ENCODE measurements at regions of chr11 and their contacts with region 1.

Region 1: DNA sequence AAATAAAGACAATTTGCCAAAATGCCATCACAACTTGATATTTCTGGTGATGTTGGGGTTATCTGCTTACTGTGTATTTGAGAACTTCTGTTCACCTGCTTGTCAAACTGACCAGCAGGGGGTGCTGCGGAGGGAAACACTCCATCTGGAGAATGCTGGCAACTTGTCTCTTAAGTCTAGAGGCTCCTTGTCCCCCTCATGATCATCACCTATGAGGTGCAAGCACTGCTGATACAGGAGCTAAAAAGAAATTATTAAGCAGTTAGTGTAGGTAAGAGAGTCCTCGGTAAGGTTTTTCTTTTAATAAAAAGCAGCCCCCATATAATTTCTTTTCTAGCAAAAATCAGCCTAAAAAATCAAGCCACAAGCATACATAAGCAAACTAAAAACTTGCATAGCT is 32.7 kb upstream of the GLYATL1B start:
- H3K4me3 Mint-ChIP-seq: no peak overlapping the region
- H3K27ac Mint-ChIP-seq: no peak overlapping the region
- H3K4me1 Mint-ChIP-seq: peaks cover 12% of the 10 kb centered on the region
- H3K27me3 Mint-ChIP-seq: peaks cover 6% of the 10 kb centered on the region

Region 2: GRCh38 chr11:58958500-58958899 is 94.9 kb before region 1 on chr11:
- intact Hi-C with region 1: loop called (anchors 1 kb)
- H3K4me3 Mint-ChIP-seq: no peak overlapping the region
- H3K27ac Mint-ChIP-seq: no peak overlapping the region
- H3K4me1 Mint-ChIP-seq: no peaks in the 10 kb centered on the region
- H3K27me3 Mint-ChIP-seq: no peaks in the 10 kb centered on the region

Region 3: GRCh38 chr11:59076876-59077571 is 23.6 kb after region 1 on chr11:
- intact Hi-C with region 1: no loop called
- H3K4me3 Mint-ChIP-seq: no peak overlapping the region
- H3K27ac Mint-ChIP-seq: no peak overlapping the region
- H3K4me1 Mint-ChIP-seq: peaks cover 27% of the 10 kb centered on the region
- H3K27me3 Mint-ChIP-seq: peaks cover 6% of the 10 kb centered on the region

Region 4: DNA sequence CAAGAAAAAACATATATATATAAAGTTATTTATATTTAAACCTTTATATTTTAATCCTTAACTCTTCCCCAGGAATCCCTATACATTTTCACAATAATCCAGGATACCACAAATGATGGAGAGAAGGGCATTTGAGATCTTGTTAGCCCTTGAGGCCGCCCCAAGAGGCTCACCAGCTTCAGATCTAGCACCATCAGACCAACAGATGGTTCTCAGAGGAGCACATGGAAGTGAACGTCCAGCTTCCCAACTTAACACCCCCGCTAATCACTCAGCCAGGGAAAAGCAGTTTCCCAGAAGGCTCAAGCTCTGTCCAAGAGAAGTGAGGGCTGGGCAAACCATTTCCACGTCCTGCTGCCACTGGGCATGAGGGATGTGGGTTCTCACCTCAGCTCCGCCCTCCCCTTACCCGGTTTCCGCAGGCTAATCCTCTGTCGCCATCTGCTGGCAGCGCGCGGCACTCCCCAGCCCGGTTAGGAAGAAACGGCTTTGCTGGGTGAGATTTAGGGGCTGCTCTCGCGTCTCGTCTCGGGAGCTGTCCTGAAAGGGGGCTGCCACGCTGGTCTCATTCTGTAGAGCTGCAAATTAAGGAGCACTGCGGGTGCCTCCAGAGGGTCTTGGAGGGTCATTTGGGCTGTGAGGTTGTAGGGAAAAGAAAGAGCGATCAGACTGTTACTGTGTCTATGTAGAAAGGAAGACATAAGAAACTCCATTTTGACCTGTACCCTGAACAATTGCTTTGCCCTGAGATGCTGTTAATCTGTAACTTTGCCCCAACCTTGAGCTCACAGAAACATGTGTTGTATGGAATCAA is 82.5 kb after region 1 on chr11:
- intact Hi-C with region 1: loop called (anchors 2 kb)
- H3K4me3 Mint-ChIP-seq: peak overlapping the region; percentile 66
- H3K27ac Mint-ChIP-seq: no peak overlapping the region
- H3K4me1 Mint-ChIP-seq: peaks cover 6% of the 10 kb centered on the region
- H3K27me3 Mint-ChIP-seq: no peaks in the 10 kb centered on the region

Region 5: DNA sequence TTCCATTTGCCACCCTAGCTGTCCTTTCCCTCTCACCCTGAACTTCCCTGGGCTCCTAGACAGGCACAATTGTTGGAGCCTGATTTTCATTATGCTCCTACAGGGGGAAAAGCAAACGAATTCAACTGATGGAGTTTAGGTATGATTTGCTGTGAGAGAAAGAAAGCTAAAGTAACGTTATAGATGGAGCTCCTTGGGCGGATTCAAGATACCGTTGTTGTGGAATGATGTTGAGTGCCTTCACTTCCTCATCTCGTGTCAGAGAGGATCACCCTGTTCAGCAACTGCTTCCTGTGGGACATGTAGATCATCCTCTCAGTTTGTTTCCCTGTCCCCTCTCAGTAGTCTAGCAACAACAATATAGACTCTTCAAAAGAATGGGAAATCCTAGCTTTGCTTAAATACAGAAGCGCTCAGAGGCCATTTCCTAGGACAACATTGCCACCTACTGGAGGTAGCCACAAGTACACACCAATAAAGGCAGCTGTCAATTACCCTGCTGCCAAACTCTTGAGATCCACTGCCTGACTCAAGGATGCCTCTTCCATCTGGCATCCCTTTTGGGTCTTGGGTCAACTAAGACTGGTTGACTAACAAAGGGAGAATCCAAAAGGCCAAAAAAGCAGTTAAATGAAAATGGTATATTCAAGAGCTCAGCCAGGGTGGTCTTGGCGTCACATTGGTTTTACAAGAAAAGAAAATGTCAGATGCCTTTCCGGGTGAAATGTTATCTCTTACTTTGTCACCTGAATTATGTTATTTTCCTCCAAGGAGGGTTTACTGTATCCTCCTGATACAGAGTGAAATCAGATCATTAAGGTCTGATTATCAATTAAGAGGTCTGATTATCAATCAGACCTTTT is 105.0 kb after region 1 on chr11:
- intact Hi-C with region 1: loop called (anchors 5 kb)
- H3K4me3 Mint-ChIP-seq: no peak overlapping the region
- H3K27ac Mint-ChIP-seq: peak overlapping the region; percentile 18
- H3K4me1 Mint-ChIP-seq: peaks cover 12% of the 10 kb centered on the region
- H3K27me3 Mint-ChIP-seq: peaks cover 2% of the 10 kb centered on the region

Measured in dendritic cell treated with granulocyte-macrophage colony-stimulating factor and Interleukin-4, amounts not matched to agents 40 ng/mL and 50 ng/mL, for 4 days (primary cell).